ENCODE measurements at regions of chr13 and their contacts with region 1.

Region 1: GRCh38 chr13:95834134-95834765 is 157.3 kb downstream of the DNAJC3 start:
- DNase-seq: peak; percentile 32
- ATAC-seq: peak; percentile 84
- H3K4me3 ChIP-seq: no peak overlapping the region
- H3K27ac ChIP-seq: no peak overlapping the region
- H3K4me1 ChIP-seq: no peaks in the 10 kb centered on the region
- H3K27me3 ChIP-seq: no peaks in the 10 kb centered on the region
- CTCF ChIP-seq: peak; percentile 89
- EP300 ChIP-seq: no peak
- POLR2A ChIP-seq: no peak
- RAD21 ChIP-seq: peak; percentile 77

Region 2: GRCh38 chr13:94408314-94409036 is 1425.8 kb before region 1 on chr13:
- CTCF ChIA-PET with region 1: no interaction called
- POLR2A ChIA-PET with region 1: no interaction called
- in situ Hi-C with region 1: no loop called
- intact Hi-C with region 1: loop called (anchors 5 kb)
- DNase-seq: no peak
- ATAC-seq: no peak
- H3K4me3 ChIP-seq: no peak overlapping the region
- H3K27ac ChIP-seq: no peak overlapping the region
- H3K4me1 ChIP-seq: no peaks in the 10 kb centered on the region
- H3K27me3 ChIP-seq: no peaks in the 10 kb centered on the region; a peak in 1 of 5 replicates
- CTCF ChIP-seq: no peak
- EP300 ChIP-seq: no peak
- POLR2A ChIP-seq: no peak
- RAD21 ChIP-seq: no peak

Region 3: DNA sequence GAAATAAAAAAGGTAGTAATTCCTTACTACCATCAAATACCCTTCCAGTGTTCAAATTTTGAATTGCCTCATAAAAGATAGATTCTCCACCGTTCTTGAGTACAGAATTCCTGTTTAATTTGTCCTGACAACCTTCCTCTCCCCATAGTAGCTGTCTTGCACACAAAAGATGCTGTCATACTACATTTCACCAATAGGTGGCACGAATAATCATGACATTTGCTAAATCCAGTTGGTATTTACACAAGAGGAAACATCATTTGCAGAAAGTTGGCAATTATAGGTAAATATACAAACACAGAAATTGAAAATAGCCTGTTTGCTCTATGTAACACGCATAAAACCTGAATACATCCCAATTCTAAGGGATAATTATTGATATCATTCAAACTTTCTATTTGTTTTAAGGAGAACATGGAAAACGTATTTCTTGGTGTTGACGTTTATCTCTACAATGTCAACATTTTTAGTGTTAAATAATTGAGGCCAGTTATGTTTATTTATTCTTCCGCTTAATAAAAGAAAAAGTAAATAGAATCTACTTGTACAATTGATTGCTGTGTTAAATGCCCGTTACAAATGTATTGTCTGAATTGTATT is 340.1 kb before region 1 on chr13:
- CTCF ChIA-PET with region 1: interaction called, 6 read pairs
- POLR2A ChIA-PET with region 1: no interaction called
- in situ Hi-C with region 1: no loop called
- intact Hi-C with region 1: loop called (anchors 2 kb)
- DNase-seq: peak; percentile 55
- ATAC-seq: peak; percentile 70
- H3K4me3 ChIP-seq: no peak overlapping the region
- H3K27ac ChIP-seq: no peak overlapping the region
- H3K4me1 ChIP-seq: no peaks in the 10 kb centered on the region
- H3K27me3 ChIP-seq: no peaks in the 10 kb centered on the region
- CTCF ChIP-seq: peak; percentile 68
- EP300 ChIP-seq: no peak
- POLR2A ChIP-seq: no peak
- RAD21 ChIP-seq: peak; percentile 28; the same call in 1 of the 2 replicates

Region 4: GRCh38 chr13:95624020-95624419 is 210.2 kb before region 1 on chr13:
- CTCF ChIA-PET with region 1: interaction called, 15 read pairs
- POLR2A ChIA-PET with region 1: no interaction called
- in situ Hi-C with region 1: loop called (anchors 5 kb)
- intact Hi-C with region 1: loop called (anchors 1 kb)
- DNase-seq: peak; percentile 29
- ATAC-seq: peak; percentile 71
- H3K4me3 ChIP-seq: no peak overlapping the region
- H3K27ac ChIP-seq: no peak overlapping the region
- H3K4me1 ChIP-seq: no peaks in the 10 kb centered on the region
- H3K27me3 ChIP-seq: no peaks in the 10 kb centered on the region
- CTCF ChIP-seq: peak; percentile 69
- EP300 ChIP-seq: no peak
- POLR2A ChIP-seq: no peak
- RAD21 ChIP-seq: no peak

Region 5: DNA sequence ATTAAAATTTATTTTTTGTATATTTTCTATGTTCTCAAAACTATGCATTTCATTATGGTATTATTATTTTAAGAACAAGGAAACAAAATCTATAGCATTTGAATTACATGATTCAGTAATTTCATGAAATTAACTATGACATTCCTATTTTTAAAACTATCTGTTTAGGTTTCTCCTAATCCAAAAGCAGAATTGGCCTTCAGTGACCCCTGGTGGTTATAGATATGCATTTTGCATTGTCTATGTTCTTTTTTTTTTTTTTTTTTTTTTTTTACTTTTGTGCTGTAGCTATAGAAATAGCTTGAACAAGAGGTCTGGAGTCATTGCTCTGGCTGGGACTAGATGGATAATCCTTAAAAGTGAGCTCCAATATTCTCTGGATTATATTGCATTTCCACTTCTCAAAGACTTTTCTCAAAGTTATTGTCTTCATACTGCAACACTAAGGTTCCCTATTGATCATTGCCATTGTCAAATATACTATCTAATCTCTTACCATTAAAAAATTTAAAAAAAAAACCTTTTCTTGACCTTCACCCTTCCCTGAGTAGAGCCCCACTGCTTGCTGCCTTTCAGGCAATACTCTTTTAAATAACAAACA is 173.2 kb before region 1 on chr13:
- CTCF ChIA-PET with region 1: interaction called, 5 read pairs
- POLR2A ChIA-PET with region 1: no interaction called
- in situ Hi-C with region 1: no loop called
- intact Hi-C with region 1: loop called (anchors 2 kb)
- DNase-seq: peak; percentile 51
- ATAC-seq: peak; percentile 34; the same call in 1 of the 3 replicates
- H3K4me3 ChIP-seq: no peak overlapping the region
- H3K27ac ChIP-seq: no peak overlapping the region
- H3K4me1 ChIP-seq: no peaks in the 10 kb centered on the region
- H3K27me3 ChIP-seq: no peaks in the 10 kb centered on the region; a peak in 1 of 5 replicates
- CTCF ChIP-seq: peak; percentile 53
- EP300 ChIP-seq: no peak
- POLR2A ChIP-seq: no peak
- RAD21 ChIP-seq: no peak

Region 6: GRCh38 chr13:95676762-95677563 is 157.3 kb before region 1 on chr13 and contains the start of gene DNAJC3:
- CTCF ChIA-PET with region 1: no interaction called
- POLR2A ChIA-PET with region 1: no interaction called
- in situ Hi-C with region 1: no loop called
- intact Hi-C with region 1: loop called (anchors 1 kb)
- DNase-seq: peak; percentile 92
- ATAC-seq: peak; percentile 97
- H3K4me3 ChIP-seq: peak within 1 kb of the TSS; percentile 82 to 88 (median 83)
- H3K27ac ChIP-seq: peak within 1 kb of the TSS; percentile 91
- H3K4me1 ChIP-seq: peaks cover 64% of the 10 kb centered on the region
- H3K27me3 ChIP-seq: no peaks in the 10 kb centered on the region; a peak in 1 of 5 replicates
- CTCF ChIP-seq: peak; percentile 5; the same call in 1 of the 2 replicates
- EP300 ChIP-seq: peak in 1 of 2 experiments; percentile 52; a peak in 1 of 4 replicates
- POLR2A ChIP-seq: peak; percentile 90 to 92
- RAD21 ChIP-seq: peak; percentile 53; the same call in 1 of the 2 replicates
- total RNA-seq, gene DNAJC3: 38.1 and 48.2 TPM in 2 replicates

Region 7: DNA sequence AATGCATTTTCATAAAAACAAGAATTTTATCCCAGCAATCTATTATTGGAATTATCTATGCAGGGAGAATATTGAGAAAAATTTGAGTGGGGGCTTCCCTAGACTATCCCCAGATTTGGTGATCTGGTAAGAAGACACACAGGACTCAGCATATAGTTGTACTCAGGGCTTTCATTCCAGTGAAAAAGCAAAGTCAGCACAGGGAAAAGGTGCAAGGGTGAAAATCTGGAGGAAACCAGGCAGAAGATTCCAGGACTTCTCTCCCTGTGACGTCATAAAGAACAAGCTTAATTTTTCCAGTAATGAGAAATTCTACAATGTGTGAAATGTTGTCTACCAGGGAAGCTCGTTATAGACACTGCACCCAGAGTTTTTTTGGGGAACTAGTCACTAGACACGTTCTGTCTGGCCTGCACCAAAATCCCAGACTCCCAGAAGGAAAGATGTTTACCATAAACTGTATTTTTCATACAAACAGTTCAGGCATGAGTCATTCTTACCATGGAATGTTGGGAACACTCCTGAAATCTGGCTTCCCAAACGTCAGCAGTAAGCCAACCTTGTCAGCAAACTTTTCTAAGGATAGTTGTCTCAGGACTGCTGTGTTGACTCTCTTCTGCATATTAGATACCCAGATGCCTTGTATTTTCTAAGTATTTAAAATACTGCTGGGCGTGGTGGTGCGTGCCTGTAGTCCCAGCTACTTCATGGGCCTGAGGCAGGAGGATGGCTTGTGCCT is 49.9 kb before region 1 on chr13:
- CTCF ChIA-PET with region 1: no interaction called
- POLR2A ChIA-PET with region 1: no interaction called
- in situ Hi-C with region 1: no loop called
- intact Hi-C with region 1: no loop called
- DNase-seq: peak; percentile 9
- ATAC-seq: no peak; the same call in 2 of the 3 replicates
- H3K4me3 ChIP-seq: no peak overlapping the region
- H3K27ac ChIP-seq: no peak overlapping the region
- H3K4me1 ChIP-seq: no peaks in the 10 kb centered on the region
- H3K27me3 ChIP-seq: no peaks in the 10 kb centered on the region
- CTCF ChIP-seq: no peak
- EP300 ChIP-seq: no peak
- POLR2A ChIP-seq: no peak
- RAD21 ChIP-seq: no peak

Region 8: GRCh38 chr13:95858286-95859075 is 24.2 kb after region 1 on chr13:
- CTCF ChIA-PET with region 1: no interaction called
- POLR2A ChIA-PET with region 1: no interaction called
- in situ Hi-C with region 1: no loop called
- intact Hi-C with region 1: no loop called
- DNase-seq: no peak
- ATAC-seq: no peak
- H3K4me3 ChIP-seq: no peak overlapping the region
- H3K27ac ChIP-seq: no peak overlapping the region
- H3K4me1 ChIP-seq: no peaks in the 10 kb centered on the region
- H3K27me3 ChIP-seq: no peaks in the 10 kb centered on the region
- CTCF ChIP-seq: no peak
- EP300 ChIP-seq: no peak
- POLR2A ChIP-seq: no peak
- RAD21 ChIP-seq: no peak

Region 9: GRCh38 chr13:96020155-96020575 is 185.9 kb after region 1 on chr13:
- CTCF ChIA-PET with region 1: no interaction called
- POLR2A ChIA-PET with region 1: no interaction called
- in situ Hi-C with region 1: no loop called
- intact Hi-C with region 1: no loop called
- DNase-seq: peak; percentile 75
- ATAC-seq: peak; percentile 96
- H3K4me3 ChIP-seq: no peak overlapping the region
- H3K27ac ChIP-seq: no peak overlapping the region
- H3K4me1 ChIP-seq: peaks cover 16% of the 10 kb centered on the region
- H3K27me3 ChIP-seq: no peaks in the 10 kb centered on the region
- CTCF ChIP-seq: peak; percentile 83
- EP300 ChIP-seq: no peak
- POLR2A ChIP-seq: no peak
- RAD21 ChIP-seq: peak; percentile 74

Measured in HepG2 (cell line).